ENCODE measurements at regions of chr11 and their contacts with region 1.

Region 1: GRCh38 chr11:46367244-46367915 is 14.1 kb upstream of the MDK start:
- DNase-seq: peak; percentile 76
- H3K4me3 Mint-ChIP-seq: no peak overlapping the region
- H3K27ac Mint-ChIP-seq: no peak overlapping the region
- H3K4me1 Mint-ChIP-seq: peaks cover 27% of the 10 kb centered on the region
- H3K27me3 Mint-ChIP-seq: no peaks in the 10 kb centered on the region

Region 2: DNA sequence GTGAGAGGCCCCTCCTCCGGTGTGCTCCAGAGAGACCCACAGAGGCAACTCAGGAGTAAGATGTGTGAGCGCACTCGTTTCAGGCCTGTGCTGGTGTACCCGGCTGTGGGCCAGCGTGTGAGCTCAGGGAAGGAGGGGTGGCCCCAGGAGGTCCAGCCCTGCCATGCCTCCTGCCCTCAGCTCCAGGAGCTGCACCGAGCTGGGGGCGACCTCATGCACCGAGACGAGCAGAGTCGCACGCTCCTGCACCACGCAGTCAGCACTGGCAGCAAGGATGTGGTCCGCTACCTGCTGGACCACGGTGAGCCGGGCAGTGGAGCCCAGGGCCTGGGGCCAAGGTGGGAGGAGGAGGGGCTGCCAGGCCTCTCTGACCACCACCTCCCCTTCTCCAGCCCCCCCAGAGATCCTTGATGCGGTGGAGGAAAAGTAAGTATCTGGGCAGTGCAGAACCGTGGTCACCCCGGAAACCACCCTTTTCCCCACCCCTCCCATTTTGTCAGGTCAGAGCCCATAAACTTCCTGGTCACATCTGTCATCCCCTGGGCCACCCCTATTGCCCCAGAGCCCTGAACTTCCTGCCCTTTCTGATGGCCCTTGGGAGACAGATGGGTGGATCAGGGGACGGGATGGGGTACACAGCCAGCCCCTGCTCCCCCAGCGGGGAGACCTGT is 11.6 kb after region 1 on chr11:
- CTCF ChIA-PET with region 1: interaction called, 10 read pairs
- POLR2A ChIA-PET with region 1: interaction called, 3 read pairs
- DNase-seq: no peak
- H3K4me3 Mint-ChIP-seq: peak overlapping the region; percentile 41
- H3K27ac Mint-ChIP-seq: no peak overlapping the region
- H3K4me1 Mint-ChIP-seq: peaks cover 15% of the 10 kb centered on the region
- H3K27me3 Mint-ChIP-seq: peaks cover 9% of the 10 kb centered on the region

Region 3: DNA sequence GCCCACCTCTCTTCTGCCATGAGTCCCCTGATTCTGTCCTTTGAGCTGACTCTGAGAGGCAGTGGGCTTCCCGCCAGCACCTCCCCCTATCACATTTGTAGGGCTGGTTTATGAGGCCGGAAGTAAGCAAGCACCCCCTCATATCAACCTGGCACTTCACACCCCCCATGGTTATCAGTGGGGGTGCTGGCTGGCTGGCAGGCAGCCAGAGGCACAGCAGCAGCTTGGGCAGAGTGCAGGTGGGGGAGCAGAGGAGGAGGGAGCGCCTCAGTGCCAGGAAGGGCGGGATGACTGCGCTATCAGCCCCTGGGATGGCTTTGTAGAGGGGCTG is 47.1 kb after region 1 on chr11:
- CTCF ChIA-PET with region 1: no interaction called
- POLR2A ChIA-PET with region 1: no interaction called
- DNase-seq: no peak
- H3K4me3 Mint-ChIP-seq: no peak overlapping the region
- H3K27ac Mint-ChIP-seq: no peak overlapping the region
- H3K4me1 Mint-ChIP-seq: no peaks in the 10 kb centered on the region
- H3K27me3 Mint-ChIP-seq: no peaks in the 10 kb centered on the region

Measured in activated CD4-positive, alpha-beta memory T cell treated with anti-CD3 and anti-CD28 coated beads, Interleukin-2, amount 10 ng/mL, durations not matched to agents 7 days and 5 days (primary cell).